Ovary (tissue), 10 donors: ENCODE measurements at regions of chr1 and their contacts with region 1.

Region 1: GRCh38 chr1:26161415-26162219 is 2.7 kb downstream of the FAM110D start:
- DNase-seq: peak; percentile 46 to 71 (median 63)
- H3K4me3 ChIP-seq: peak overlapping the region; percentile 38
- H3K27ac ChIP-seq: no peak overlapping the region
- H3K4me1 ChIP-seq: peaks cover 8% of the 10 kb centered on the region
- H3K27me3 ChIP-seq: no peaks in the 10 kb centered on the region
- CTCF ChIP-seq: peak in 2 of 3 donors; percentile 32 to 46
- EP300 ChIP-seq: no peak
- POLR2A ChIP-seq: no peak

Region 2: DNA sequence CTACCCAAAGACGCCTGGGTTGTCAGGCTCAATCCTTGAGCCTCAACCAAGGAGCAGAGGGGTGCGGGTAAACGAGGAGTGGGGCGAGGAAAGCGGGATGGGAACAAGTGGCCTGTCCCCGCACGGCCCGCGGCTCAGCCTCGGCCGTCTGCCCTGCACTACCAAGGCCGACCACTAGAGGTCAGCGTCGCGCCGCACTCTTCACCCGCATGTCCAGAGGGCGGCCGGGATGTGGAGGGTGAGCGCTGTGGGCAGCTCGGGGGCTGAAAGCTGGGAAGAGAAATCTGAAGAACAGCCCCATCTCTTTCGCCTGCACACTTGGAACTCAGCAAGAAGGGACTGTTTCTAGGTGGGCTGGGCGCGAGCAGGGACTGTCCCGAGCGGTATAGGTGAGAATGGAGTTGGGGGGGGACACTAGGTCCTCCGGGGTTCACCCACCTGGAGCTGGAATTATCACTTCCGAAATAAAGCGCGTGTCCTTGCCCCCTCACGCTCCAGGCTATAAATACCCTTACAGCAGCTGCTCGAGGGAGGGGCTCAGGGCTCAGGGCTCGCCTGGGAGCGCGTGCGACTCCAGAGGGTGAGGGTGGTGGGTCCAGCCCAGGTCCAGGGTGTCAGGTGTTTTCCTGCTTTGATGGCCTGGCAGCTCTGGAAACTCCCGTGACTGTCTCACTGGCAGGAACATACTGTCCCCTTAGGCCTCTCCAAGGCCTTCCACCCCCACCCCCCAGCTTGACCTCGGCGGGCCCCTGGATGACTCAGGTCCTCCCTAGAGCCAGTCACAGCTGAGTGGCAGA is 125.5 kb before region 1 on chr1:
- intact Hi-C with region 1: loop called in 1 of 4 experiments (anchors 10 kb)
- DNase-seq: peak; percentile 80 to 92 (median 87)
- H3K4me3 ChIP-seq: peak overlapping the region; percentile 54
- H3K27ac ChIP-seq: peak overlapping the region; percentile 72 to 90
- H3K4me1 ChIP-seq: peaks cover 1% of the 10 kb centered on the region
- H3K27me3 ChIP-seq: no peaks in the 10 kb centered on the region
- CTCF ChIP-seq: peak; percentile 98 to 99 (median 99)
- EP300 ChIP-seq: no peak
- POLR2A ChIP-seq: no peak

Region 3: GRCh38 chr1:26066857-26067256 is 94.8 kb before region 1 on chr1:
- intact Hi-C with region 1: no loop called
- DNase-seq: no peak
- H3K4me3 ChIP-seq: no peak overlapping the region
- H3K27ac ChIP-seq: no peak overlapping the region
- H3K4me1 ChIP-seq: no peaks in the 10 kb centered on the region
- H3K27me3 ChIP-seq: no peaks in the 10 kb centered on the region
- CTCF ChIP-seq: no peak
- EP300 ChIP-seq: no peak
- POLR2A ChIP-seq: no peak

Region 4: DNA sequence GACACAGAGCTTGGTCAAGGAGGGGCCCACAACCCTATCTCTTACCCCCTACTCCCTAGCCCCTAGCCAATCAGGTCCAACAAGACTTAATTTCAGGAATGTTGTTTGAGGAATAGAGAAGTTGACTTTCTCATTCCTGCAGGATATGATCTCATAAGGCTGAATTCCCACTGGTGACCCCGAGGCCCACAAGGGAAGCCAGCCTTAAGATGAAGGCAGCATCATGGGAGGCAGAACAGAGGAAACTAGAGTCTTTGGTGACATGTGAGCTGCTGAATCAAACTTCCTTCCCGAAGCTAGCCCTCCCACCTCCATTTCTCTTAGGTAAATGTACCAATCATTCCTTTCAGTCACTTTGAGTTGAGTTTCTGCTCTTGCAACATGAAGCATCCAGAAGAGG is 59.1 kb before region 1 on chr1:
- intact Hi-C with region 1: loop called in 1 of 4 experiments (anchors 5 kb)
- DNase-seq: no peak
- H3K4me3 ChIP-seq: no peak overlapping the region
- H3K27ac ChIP-seq: no peak overlapping the region
- H3K4me1 ChIP-seq: no peaks in the 10 kb centered on the region
- H3K27me3 ChIP-seq: no peaks in the 10 kb centered on the region
- CTCF ChIP-seq: no peak
- EP300 ChIP-seq: no peak
- POLR2A ChIP-seq: no peak

Region 5: GRCh38 chr1:26111530-26112406 is 49.8 kb before region 1 on chr1 and contains the start of gene PDIK1L:
- intact Hi-C with region 1: loop called in 1 of 4 experiments (anchors 5 kb)
- DNase-seq: peak; percentile 92 to 97 (median 95)
- H3K4me3 ChIP-seq: peak within 1 kb of the TSS; percentile 91
- H3K27ac ChIP-seq: peak within 1 kb of the TSS; percentile 50 to 95
- H3K4me1 ChIP-seq: peaks cover 2% of the 10 kb centered on the region
- H3K27me3 ChIP-seq: no peaks in the 10 kb centered on the region
- CTCF ChIP-seq: no peak
- EP300 ChIP-seq: no peak
- POLR2A ChIP-seq: no peak
- total RNA-seq, gene PDIK1L: 5.7 to 16.5 (median 12.3) TPM

Region 6: DNA sequence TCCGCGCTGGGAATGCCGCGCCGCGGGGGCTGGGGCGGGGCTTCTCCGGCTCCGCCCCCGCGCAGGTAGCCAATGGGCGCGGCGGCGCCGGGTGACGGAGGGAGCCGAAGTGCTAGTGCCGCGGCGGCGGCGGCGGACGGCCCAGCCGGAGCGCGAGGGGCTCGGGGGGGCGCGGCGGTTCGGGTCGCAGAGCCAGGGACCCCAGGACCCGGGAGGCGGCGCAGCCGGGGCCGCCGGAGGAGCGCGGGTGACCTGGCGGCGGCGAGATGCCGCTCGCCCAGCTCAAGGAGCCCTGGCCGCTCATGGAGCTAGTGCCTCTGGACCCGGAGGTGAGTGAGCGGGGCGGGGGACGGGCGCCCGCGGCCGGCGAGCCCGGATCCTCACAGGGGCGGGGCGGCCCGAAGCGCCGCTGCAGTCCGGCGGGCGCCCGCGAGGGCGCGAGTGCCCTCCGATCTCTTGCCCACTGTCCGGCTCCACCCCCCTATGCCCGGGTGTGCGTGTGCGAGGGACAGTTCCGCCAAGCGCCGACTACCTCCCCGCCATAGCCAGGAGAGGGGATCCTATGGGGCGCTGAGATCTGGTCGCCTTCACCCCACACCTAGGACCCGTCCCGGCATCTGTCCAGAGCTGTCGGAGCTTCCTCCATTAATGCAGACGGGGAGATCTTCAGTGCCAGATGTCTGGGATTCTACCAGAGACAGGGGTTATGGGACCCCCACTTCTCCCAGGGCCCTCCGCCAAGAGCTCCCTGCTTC is 368.2 kb after region 1 on chr1 and contains the start of gene RPS6KA1:
- intact Hi-C with region 1: no loop called
- DNase-seq: peak; percentile 47 to 78 (median 61)
- H3K4me3 ChIP-seq: peak within 1 kb of the TSS; percentile 37
- H3K27ac ChIP-seq: no peak within 1 kb of the TSS
- H3K4me1 ChIP-seq: no peaks in the 10 kb centered on the region
- H3K27me3 ChIP-seq: no peaks in the 10 kb centered on the region
- CTCF ChIP-seq: no peak
- EP300 ChIP-seq: no peak
- POLR2A ChIP-seq: no peak
- total RNA-seq, gene RPS6KA1: 3.2 to 18.8 (median 5.2) TPM